Psoas muscle (tissue), 8 donors: ENCODE measurements at regions of chr3 and their contacts with region 1.

Region 1: DNA sequence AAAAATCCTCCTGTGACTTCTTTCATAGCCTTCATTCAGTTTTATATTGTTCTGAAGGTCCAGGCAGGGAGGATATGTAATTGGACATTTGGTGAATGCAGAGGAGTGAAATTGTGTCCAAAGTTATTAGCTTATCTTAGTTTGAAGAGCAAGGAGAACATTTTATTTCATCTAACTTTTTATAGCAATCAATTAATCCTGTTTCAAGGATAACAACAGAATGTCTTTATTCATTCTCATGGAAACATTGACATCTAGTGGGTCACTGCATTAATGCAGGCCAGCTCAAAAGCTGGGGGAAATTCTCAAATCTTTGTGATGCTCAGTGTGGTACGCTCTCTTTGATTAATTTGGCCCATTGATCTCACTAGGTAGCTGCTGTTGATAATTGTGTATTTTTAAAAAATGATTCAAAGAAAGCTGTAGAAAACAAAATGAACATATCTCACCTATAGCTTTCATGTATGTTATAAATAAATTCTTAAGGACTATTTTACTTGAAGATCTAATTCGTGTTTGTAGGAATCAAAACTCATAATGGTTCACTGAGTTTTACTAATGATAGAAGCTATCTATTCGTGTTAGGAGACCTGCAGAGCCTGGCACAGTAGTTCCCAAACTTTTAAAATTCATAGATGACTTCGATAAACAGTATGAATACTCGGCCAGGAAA is 150.8 kb upstream of the KCNMB2 start:
- DNase-seq: no peak
- ATAC-seq: peak; percentile 61 to 86 (median 72)
- H3K4me3 ChIP-seq: no peak overlapping the region
- H3K27ac ChIP-seq: no peak overlapping the region
- H3K4me1 ChIP-seq: peaks cover 13% of the 10 kb centered on the region
- H3K27me3 ChIP-seq: no peaks in the 10 kb centered on the region
- CTCF ChIP-seq: peak; percentile 90

Region 2: DNA sequence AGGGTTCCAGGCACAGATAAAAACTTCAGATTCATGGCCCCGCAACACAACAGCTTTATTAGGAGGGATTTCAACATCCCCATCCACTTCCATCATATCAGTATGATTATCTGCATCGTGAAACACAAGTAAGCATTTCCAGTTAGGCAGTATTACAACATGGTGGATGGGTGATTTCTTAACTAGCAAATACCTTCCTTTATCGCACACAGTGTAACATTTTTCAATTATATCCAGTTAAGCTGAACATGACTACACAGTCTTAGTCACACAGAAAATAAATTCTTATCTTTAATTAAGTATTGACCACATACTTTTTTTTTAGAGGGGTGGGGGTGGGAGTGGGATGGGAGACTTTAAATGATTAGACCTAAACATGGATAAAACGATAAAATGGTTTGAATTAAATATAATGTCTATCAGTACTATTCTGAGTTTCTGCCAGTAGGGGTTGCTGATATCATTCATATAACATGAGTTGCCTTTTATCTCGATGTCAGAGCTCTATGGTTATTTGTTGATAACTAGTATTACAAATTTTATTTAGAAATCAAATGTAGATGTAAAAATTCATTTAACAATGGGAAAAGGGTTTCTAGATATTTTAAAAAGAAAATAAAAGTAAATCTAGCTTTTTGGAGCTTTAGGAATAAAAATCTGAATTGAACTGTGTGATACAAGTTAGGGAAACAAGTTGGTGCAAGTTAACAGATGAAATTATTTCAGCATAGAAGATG is 1334.7 kb before region 1 on chr3:
- intact Hi-C with region 1: loop called in 1 of 2 experiments (anchors 5 kb)
- DNase-seq: no peak
- ATAC-seq: peak; percentile 57 to 83 (median 68)
- H3K4me3 ChIP-seq: no peak overlapping the region
- H3K27ac ChIP-seq: no peak overlapping the region
- H3K4me1 ChIP-seq: peaks cover 5% of the 10 kb centered on the region
- H3K27me3 ChIP-seq: no peaks in the 10 kb centered on the region
- CTCF ChIP-seq: peak; percentile 65

Region 3: GRCh38 chr3:177491296-177492032 is 894.0 kb before region 1 on chr3:
- intact Hi-C with region 1: loop called in 1 of 2 experiments (anchors 10 kb)
- DNase-seq: no peak
- ATAC-seq: peak in 1 of 4 donors; percentile 56
- H3K4me3 ChIP-seq: no peak overlapping the region
- H3K27ac ChIP-seq: no peak overlapping the region
- H3K4me1 ChIP-seq: no peaks in the 10 kb centered on the region
- H3K27me3 ChIP-seq: no peaks in the 10 kb centered on the region
- CTCF ChIP-seq: no peak

Region 4: GRCh38 chr3:177610677-177611633 is 774.5 kb before region 1 on chr3:
- intact Hi-C with region 1: no loop called
- DNase-seq: no peak
- ATAC-seq: no peak
- H3K4me3 ChIP-seq: no peak overlapping the region
- H3K27ac ChIP-seq: no peak overlapping the region
- H3K4me1 ChIP-seq: peaks cover 5% of the 10 kb centered on the region
- H3K27me3 ChIP-seq: no peaks in the 10 kb centered on the region
- CTCF ChIP-seq: no peak